Transverse colon (tissue), 4 donors: ENCODE measurements at regions of chr13 and their contacts with region 1.

Region 1: DNA sequence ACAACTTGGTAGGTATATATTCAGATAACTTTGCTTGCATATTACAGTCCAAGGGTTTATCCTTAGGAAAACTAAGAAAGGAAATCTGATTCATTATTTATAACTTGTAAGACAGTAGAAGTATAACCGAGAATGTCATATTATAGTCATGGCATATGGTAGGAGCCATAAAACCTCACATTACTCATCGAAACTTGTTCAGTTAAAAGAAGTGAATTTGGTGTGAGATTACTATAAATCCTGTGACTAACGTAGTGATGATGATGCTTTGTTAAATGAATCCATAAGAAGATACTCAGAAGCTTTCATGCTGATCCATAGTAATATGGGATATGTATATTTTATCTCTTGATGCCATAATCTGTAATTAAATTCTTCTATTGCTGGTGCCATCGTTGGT is 57.3 kb downstream of the MTUS2 start:
- DNase-seq: no peak
- H3K4me3 ChIP-seq: no peak overlapping the region
- H3K27ac ChIP-seq: no peak overlapping the region
- H3K4me1 ChIP-seq: no peaks in the 10 kb centered on the region
- H3K27me3 ChIP-seq: no peaks in the 10 kb centered on the region
- CTCF ChIP-seq: no peak
- EP300 ChIP-seq: no peak
- POLR2A ChIP-seq: no peak

Region 2: GRCh38 chr13:28854657-28855056 is 22.8 kb before region 1 on chr13:
- in situ Hi-C with region 1: no loop called
- intact Hi-C with region 1: loop called (anchors 2 kb)
- DNase-seq: no peak
- H3K4me3 ChIP-seq: no peak overlapping the region
- H3K27ac ChIP-seq: no peak overlapping the region
- H3K4me1 ChIP-seq: no peaks in the 10 kb centered on the region
- H3K27me3 ChIP-seq: no peaks in the 10 kb centered on the region
- CTCF ChIP-seq: no peak
- EP300 ChIP-seq: no peak
- POLR2A ChIP-seq: no peak

Region 3: DNA sequence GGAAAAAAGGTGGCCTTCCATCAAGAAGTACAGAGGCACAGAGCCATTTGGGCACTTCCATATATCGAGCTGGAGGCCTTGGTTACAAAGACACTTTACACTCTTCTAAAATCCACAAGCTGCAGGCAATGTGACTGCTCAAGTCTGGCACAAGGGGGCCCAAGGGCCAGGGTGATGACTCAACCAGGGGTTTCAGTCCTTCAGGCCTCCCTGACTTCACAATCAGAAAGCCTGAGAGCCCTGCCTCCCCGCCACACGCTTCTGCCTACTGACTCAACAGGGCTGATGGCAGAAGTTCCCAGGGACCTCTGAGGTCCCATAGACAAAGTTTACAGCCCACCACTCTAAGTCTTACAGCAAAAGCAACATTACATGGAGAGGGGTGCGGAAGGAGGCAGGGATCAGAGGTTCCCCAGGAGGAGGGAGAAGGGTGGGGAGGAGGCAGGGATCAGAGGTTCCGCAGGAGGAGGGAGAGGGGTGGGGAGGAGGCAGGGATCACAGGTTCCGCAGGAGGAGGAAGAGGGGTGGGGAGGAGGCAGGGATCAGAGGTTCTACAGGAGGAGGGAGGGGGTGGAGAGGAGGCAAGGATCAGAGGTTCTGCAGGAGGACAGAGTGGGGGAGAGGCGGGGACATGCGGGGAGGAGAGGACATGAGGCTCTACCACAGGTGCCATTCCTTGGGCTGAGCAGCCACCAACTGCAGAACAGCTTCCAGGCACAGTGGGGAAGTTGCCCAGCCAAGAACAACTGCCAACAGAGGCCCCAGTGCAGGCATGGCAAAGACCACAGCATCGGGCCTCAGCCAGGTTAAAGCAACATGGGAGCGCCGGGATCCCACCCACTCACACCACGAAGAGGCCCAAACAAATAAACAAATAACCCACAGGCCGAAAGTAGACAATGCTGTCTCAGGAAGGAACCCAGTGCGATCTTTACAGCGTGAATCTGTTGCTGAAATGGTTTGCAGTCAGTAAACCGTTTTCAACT is 666.1 kb after region 1 on chr13:
- in situ Hi-C with region 1: no loop called
- intact Hi-C with region 1: no loop called
- DNase-seq: no peak
- H3K4me3 ChIP-seq: no peak overlapping the region
- H3K27ac ChIP-seq: no peak overlapping the region
- H3K4me1 ChIP-seq: peaks cover 0 to 12% (median 6%) of the 10 kb centered on the region in 4 donors
- H3K27me3 ChIP-seq: no peaks in the 10 kb centered on the region
- CTCF ChIP-seq: no peak
- EP300 ChIP-seq: no peak
- POLR2A ChIP-seq: no peak